ENCODE measurements at regions of chr6 and their contacts with region 1.

Region 1: DNA sequence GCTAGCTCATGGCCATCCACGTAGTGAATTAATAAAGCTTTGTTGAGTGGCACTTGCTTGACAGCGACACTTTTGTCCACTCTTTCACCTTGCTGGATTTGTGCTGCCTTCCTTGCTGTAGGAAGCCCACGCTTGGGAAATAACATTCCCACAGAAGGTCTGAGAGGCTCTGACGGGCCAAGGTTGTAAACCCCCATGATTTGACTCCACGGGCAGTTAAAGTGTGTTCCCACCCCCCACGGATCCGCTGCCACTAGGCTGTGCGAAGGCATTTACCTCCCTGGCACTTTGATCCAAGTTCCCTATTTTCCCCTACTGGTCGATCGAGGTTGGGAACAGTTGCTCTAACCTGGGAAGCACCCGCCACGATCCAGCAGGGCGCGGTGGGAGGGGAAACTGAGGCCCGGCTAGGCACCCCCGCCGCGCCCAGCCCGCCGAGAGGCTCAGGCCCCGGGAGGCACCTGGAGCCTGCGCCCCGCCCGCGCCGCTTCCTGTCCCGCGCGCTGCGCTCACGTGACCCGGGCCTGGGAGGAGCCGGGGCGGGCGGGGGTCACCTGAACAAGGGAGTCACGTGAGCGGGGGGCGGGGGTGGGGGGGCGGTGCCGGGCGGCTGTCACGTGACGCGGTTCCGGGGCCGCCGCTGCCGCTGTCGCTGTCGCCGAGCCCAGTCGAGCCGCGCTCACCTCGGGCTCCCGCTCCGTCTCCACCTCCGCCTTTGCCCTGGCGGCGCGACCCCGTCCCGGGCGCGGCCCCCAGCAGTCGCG is at the start of gene IGF2R:
- DNase-seq: peak; percentile 93 to 97 (median 97)
- ATAC-seq: peak; percentile 95 to 96
- H3K4me3 ChIP-seq: peak within 1 kb of the TSS; percentile 82
- H3K27ac ChIP-seq: peak within 1 kb of the TSS; percentile 81
- H3K4me1 ChIP-seq: peaks cover 9% of the 10 kb centered on the region
- H3K27me3 ChIP-seq: no peaks in the 10 kb centered on the region
- total RNA-seq, gene IGF2R: 41.4 to 48.9 (median 46.6) TPM

Region 2: DNA sequence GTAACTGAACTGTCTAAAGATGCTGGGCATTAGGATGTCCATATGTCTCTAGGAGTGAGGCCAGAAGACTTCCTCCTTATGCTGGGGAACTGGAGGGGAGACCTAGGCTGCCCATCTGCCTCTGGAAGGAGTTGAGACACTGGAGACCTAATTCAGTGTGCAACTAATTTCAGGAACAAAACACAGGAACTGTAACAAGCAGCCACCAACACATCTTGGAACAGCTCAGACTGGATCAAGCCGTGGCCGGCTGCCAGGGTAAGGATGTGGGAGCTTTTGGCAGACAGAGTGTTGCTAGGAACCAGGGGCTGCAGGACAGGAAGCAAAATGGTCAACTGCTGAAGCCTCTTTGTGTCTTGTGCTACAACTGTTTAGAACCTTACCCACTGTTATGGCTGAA is 94.2 kb before region 1 on chr6:
- intact Hi-C with region 1: no loop called
- DNase-seq: peak; percentile 47 to 88 (median 85)
- ATAC-seq: peak; percentile 63 to 68
- H3K4me3 ChIP-seq: no peak overlapping the region
- H3K27ac ChIP-seq: no peak overlapping the region
- H3K4me1 ChIP-seq: peaks cover 3% of the 10 kb centered on the region
- H3K27me3 ChIP-seq: no peaks in the 10 kb centered on the region

Region 3: DNA sequence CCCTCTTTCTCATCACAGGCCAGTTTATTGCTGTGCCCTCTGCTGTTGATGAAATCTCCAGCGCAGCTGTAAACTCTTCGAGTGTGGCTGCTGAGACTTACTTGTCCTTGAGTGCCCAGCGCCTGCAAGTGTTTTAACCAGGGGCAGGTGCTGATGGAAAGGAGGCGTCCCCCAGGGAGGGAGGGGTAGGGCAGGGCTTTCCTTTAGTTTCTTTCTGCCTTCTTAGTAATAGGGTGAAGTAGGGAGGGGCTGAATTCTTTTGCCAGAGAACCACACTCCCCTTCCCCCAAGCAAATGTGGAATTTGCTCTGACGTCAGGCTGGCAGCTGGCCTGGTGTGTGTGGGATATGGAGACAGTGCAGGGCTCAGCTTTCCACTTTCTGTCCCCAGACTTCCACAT is 61.5 kb after region 1 on chr6:
- intact Hi-C with region 1: loop called in 2 of 4 experiments (anchors 10 kb)
- DNase-seq: peak; percentile 91 to 95 (median 93)
- ATAC-seq: peak; percentile 93 to 96
- H3K4me3 ChIP-seq: no peak overlapping the region
- H3K27ac ChIP-seq: peak overlapping the region; percentile 33
- H3K4me1 ChIP-seq: peaks cover 3% of the 10 kb centered on the region
- H3K27me3 ChIP-seq: no peaks in the 10 kb centered on the region

Region 4: DNA sequence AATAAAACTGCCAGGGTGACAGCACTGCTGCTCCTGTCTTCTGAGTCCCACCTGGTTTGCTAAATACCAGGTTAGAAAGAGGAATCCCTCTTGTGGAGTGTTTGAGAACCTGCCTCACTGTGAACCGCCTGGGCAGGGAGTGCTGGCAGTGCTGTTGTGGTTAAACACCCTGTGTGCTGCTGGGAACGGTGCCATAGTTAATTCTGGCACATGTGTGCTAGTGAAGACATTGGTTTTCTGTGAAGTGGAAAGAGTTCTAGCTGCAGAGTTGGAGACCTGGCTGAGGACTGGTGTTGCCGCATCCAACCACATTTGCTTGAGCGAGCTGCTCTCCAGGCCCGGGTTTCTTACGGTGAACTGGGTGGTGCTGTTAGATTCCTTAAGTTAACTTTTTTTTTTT is 73.0 kb after region 1 on chr6:
- intact Hi-C with region 1: loop called (anchors 10 kb)
- DNase-seq: peak; percentile 69 to 83 (median 71)
- ATAC-seq: peak; percentile 80 to 86
- H3K4me3 ChIP-seq: no peak overlapping the region
- H3K27ac ChIP-seq: no peak overlapping the region
- H3K4me1 ChIP-seq: peaks cover 5% of the 10 kb centered on the region
- H3K27me3 ChIP-seq: no peaks in the 10 kb centered on the region